Astrocyte of the cerebellum (primary cell): ENCODE measurements at regions of chr2 and their contacts with region 1.

Region 1: DNA sequence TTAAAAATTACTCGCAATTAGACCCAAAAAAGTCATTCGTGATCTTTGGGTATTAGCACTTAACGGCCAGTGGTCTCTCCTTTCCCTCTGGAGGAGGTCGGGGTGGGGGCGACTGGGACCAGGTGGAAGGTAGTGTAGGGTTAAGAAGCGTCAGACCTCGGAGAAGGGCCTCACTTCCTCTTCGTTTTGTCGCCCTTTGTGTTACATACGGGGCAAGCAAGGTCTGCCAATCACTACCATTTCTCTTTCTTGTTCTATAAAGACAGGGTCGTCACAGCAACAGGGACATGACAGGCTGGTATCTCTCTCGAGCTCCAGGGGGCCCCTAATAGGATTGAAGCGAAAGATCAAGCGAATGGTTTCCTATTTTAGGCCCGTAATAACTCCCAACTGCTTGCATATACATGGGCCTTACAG is 136.6 kb downstream of the INSIG2 start:
- DNase-seq: no peak
- H3K4me3 ChIP-seq: no peak overlapping the region
- CTCF ChIP-seq: no peak

Region 2: GRCh38 chr2:118325321-118325955 is 100.5 kb after region 1 on chr2:
- in situ Hi-C with region 1: loop called (anchors 5 kb)
- DNase-seq: no peak
- H3K4me3 ChIP-seq: no peak overlapping the region
- CTCF ChIP-seq: no peak

Region 3: GRCh38 chr2:118530976-118531375 is 306.1 kb after region 1 on chr2:
- in situ Hi-C with region 1: no loop called
- DNase-seq: no peak
- H3K4me3 ChIP-seq: no peak overlapping the region
- CTCF ChIP-seq: no peak

Region 4: DNA sequence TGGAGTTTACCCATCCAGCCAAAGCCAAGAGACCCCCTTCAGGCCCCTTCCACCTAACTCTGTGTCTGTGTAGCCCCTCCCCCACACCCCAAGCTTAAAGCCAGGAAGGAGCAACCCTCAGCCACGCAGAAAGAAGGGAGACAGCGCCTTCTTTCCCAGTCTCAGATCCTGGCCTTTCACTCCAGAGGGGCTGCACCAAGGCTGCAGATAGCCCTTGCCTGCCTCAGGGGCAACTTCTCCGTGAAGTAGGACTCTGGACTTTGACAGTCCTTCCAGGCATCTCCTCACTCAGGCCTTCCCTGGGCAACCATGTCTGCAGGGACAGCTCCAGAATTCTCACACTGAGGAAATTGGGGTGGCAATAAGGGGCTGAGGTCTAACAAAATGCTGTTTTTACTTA is 649.4 kb after region 1 on chr2:
- in situ Hi-C with region 1: loop called (anchors 5 kb)
- DNase-seq: no peak
- H3K4me3 ChIP-seq: no peak overlapping the region
- CTCF ChIP-seq: no peak